Activated CD4-positive, alpha-beta T cell treated with anti-CD3 and anti-CD28 coated beads for 36 hours (primary cell): ENCODE measurements at regions of chr19 and their contacts with region 1.

Region 1: DNA sequence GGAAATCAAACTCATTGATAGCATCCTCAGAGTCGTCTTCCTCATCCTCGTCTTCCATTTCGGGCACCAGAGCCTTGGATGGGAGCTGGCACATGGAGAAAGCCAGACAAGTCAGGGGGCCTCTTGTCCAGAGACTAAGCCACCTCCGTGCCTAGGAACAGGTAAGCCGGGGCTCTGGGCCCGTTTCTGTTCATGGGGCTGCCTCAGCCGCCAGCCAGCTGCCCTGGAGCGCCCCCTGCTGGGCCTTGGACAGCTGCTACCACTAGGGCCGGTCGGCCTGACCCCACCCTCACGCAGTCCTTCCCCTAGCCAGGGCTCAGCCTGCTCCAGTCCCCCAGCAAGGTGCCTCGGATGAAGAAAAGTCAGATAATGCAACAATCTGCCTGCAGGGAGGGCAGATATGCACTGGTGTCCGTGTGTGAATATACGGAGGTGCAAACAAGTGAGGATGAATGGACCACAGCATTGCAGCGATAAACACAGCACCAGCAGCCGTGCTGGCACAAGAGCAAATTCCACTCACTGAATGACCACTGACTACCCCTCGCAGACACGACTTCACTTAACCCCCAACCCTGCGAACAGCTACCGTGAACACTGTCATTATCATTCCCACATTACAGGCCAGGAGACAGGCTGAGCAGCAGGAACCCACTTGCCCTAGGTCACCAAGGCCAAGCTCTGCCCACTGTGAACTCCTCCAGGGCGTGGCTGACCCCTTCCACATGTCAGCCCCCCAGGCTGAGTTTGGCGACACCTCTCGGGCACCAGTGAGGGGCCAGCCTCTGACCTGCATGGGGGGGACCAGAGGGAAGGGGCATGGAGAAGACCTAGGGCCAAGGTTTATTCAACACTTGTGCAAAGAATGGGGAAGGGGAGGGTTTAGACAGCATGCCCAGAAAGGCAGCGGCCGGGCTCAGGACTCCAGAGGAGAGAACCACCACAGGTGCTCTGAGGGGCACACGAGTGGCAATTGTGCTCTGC is 12.1 kb upstream of the PRKD2 start:
- DNase-seq: peak; percentile 89
- ATAC-seq: peak; percentile 93
- H3K4me3 Mint-ChIP-seq: no peak overlapping the region
- H3K27ac Mint-ChIP-seq: no peak overlapping the region
- H3K4me1 Mint-ChIP-seq: peaks cover 22% of the 10 kb centered on the region
- H3K27me3 Mint-ChIP-seq: no peaks in the 10 kb centered on the region

Region 2: GRCh38 chr19:46529622-46530462 is 199.1 kb before region 1 on chr19:
- CTCF ChIA-PET with region 1: no interaction called
- POLR2A ChIA-PET with region 1: no interaction called
- intact Hi-C with region 1: loop called in 1 of 2 experiments (anchors 1 kb)
- DNase-seq: peak; percentile 86
- ATAC-seq: peak; percentile 75
- H3K4me3 Mint-ChIP-seq: no peak overlapping the region
- H3K27ac Mint-ChIP-seq: peak overlapping the region; percentile 74
- H3K4me1 Mint-ChIP-seq: peaks cover 24% of the 10 kb centered on the region
- H3K27me3 Mint-ChIP-seq: no peaks in the 10 kb centered on the region

Region 3: DNA sequence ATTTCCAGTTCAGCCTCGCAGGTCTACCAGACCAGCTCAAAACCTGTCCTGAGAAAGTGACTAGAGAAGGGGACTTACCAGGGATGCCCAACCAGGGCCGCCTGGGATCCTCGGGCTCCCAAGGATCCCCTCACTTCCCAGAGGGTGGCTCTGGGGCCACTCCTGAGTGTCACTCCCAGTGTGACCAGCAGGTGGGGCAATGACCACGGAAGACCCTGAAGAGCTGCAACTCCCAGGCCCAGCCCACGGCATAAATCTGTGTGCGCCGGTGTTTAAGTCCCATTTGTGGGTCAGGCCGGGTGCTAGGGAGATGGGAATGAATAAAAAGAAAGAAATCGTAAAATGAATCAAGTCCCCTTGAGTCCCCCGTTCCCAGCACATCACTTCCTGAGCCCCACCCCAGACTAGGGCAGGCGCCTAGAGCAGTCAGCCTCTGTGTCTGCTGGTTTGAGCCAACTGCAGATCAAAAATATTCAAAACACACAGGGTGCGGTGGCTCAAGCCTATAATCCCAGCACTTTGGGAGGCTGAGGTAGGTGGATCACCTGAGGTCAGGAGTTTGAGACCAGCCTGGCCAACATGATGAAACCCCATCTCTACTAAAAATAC is 114.8 kb before region 1 on chr19:
- CTCF ChIA-PET with region 1: interaction called, 4 read pairs
- POLR2A ChIA-PET with region 1: no interaction called
- intact Hi-C with region 1: loop called in 1 of 2 experiments (anchors 2 kb)
- DNase-seq: peak; percentile 92
- ATAC-seq: peak; percentile 49
- H3K4me3 Mint-ChIP-seq: no peak overlapping the region
- H3K27ac Mint-ChIP-seq: peak overlapping the region; percentile 62
- H3K4me1 Mint-ChIP-seq: peaks cover 82% of the 10 kb centered on the region
- H3K27me3 Mint-ChIP-seq: no peaks in the 10 kb centered on the region

Region 4: DNA sequence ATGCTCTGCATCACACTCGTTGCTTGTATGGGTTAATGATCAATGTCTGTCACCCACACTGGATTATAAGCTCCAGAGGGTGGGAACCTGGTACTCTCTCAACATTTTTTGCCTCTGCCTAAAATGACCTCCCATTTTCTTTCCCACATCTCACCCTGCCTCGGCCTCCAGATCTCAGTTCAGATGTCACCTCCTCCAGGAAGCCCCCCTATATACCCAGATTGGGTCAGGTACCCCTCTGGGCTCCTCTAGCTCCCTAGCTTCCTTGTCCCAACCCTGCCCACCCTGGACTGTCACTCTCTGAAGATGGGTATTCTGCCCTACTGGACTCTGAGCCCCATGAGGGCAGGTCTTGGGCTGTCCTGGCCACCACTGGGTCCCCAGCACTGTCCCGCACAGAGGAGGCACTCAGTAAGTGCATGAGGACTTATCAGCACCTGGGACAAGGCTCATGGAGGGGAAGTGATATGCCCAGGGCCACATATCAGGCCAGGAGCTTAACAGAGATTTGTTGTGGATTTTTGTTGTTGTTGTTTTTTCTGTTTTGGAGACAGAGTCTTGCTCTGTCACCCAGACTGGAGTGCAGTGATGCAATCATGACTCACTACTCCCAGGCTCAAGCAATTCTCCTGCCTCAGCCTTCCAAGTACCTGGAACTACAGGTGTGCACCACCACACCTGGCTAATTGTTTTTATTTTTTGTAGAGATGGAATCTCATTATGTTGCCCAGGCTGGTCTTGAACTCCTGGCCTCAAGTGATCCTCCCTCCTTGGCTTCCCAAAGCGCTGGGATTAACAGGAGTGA is 35.9 kb before region 1 on chr19:
- CTCF ChIA-PET with region 1: interaction called, 7 read pairs
- POLR2A ChIA-PET with region 1: no interaction called
- intact Hi-C with region 1: loop called in 1 of 2 experiments (anchors 5 kb)
- DNase-seq: no peak
- ATAC-seq: no peak
- H3K4me3 Mint-ChIP-seq: no peak overlapping the region
- H3K27ac Mint-ChIP-seq: peak overlapping the region; percentile 47
- H3K4me1 Mint-ChIP-seq: no peaks in the 10 kb centered on the region
- H3K27me3 Mint-ChIP-seq: no peaks in the 10 kb centered on the region

Region 5: DNA sequence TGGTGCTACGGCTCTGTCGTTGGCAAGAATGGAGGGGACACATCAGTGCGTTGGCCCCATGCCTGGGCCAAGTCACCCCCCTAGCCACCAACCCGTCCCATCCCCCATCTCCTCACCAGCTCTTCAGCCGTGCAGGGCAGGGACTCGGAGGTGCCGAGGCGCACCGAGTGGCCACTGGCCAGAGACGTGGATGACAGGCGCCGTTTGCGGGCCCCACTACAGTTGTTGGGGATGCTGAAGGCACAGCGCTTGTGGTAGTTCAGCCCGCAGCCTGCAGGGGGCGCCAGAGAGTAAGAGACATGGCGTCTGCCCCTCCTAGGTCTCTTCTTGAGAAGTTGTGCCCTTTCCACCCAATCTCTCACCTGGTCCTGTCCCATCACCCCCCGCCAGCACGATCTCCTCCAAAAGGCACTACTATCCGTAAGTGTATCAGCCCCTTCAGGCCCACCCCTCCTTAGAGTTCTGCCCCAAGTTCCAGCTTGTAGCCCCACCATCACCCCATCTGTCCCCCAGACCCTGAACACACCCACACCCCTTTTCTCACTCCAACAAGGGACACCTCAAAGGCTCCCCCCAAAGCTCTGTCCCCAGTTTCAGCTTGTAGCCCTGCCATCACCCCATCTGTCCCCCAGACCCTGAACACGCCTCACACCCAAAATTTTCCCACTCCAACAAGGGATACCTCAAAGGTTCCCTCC is 24.5 kb before region 1 on chr19:
- CTCF ChIA-PET with region 1: interaction called, 62 read pairs
- POLR2A ChIA-PET with region 1: interaction called, 10 read pairs
- intact Hi-C with region 1: loop called (anchors 1 kb)
- DNase-seq: peak; percentile 93
- ATAC-seq: peak; percentile 90
- H3K4me3 Mint-ChIP-seq: no peak overlapping the region
- H3K27ac Mint-ChIP-seq: peak overlapping the region; percentile 67
- H3K4me1 Mint-ChIP-seq: peaks cover 6% of the 10 kb centered on the region
- H3K27me3 Mint-ChIP-seq: no peaks in the 10 kb centered on the region

Region 6: GRCh38 chr19:46717034-46717723 is 11.8 kb before region 1 on chr19 and contains the start of gene PRKD2:
- CTCF ChIA-PET with region 1: interaction called, 6 read pairs
- POLR2A ChIA-PET with region 1: interaction called, 3 read pairs
- intact Hi-C with region 1: loop called in 1 of 2 experiments (anchors 2 kb)
- DNase-seq: peak; percentile 95
- ATAC-seq: peak; percentile 66
- H3K4me3 Mint-ChIP-seq: peak within 1 kb of the TSS; percentile 94
- H3K27ac Mint-ChIP-seq: peak within 1 kb of the TSS; percentile 95
- H3K4me1 Mint-ChIP-seq: peaks cover 40% of the 10 kb centered on the region
- H3K27me3 Mint-ChIP-seq: no peaks in the 10 kb centered on the region
- total RNA-seq, gene PRKD2: 76.0 to 78.3 TPM